Common myeloid progenitor, CD34-positive (primary cell): ENCODE measurements at regions of chr7 and their contacts with region 1.

Region 1: GRCh38 chr7:100190048-100190711 is 12.5 kb downstream of the STAG3 start:
- DNase-seq: peak; percentile 40 to 57 (median 51)
- H3K4me3 ChIP-seq: peak overlapping the region in 1 of 7 experiments; percentile 16
- H3K27ac ChIP-seq: no peak overlapping the region
- H3K4me1 ChIP-seq: peaks cover 0 to 14% (median 3%) of the 10 kb centered on the region in 4 experiments
- H3K27me3 ChIP-seq: no peaks in the 10 kb centered on the region

Region 2: GRCh38 chr7:100022665-100023064 is 167.5 kb before region 1 on chr7:
- CTCF ChIA-PET with region 1: no interaction called
- POLR2A ChIA-PET with region 1: no interaction called
- DNase-seq: no peak
- H3K4me3 ChIP-seq: no peak overlapping the region
- H3K27ac ChIP-seq: peak overlapping the region in 1 of 2 experiments; percentile 39
- H3K4me1 ChIP-seq: peaks cover 0 to 17% (median 6%) of the 10 kb centered on the region in 4 experiments
- H3K27me3 ChIP-seq: no peaks in the 10 kb centered on the region

Region 3: GRCh38 chr7:100177045-100178001 is 12.9 kb before region 1 on chr7 and contains the starts of genes GPC2 and STAG3:
- CTCF ChIA-PET with region 1: interaction called, 13 read pairs
- POLR2A ChIA-PET with region 1: no interaction called
- DNase-seq: peak; percentile 97 to 98 (median 98)
- H3K4me3 ChIP-seq: peak within 1 kb of the TSS; percentile 38 to 89 (median 79)
- H3K27ac ChIP-seq: no peak within 1 kb of the TSS
- H3K4me1 ChIP-seq: peaks cover 0 to 15% (median 13%) of the 10 kb centered on the region in 4 experiments
- H3K27me3 ChIP-seq: peaks cover 0 to 3% (median 0%) of the 10 kb centered on the region in 5 experiments